Activated CD4-positive, alpha-beta memory T cell treated with anti-CD3 and anti-CD28 coated beads for 36 hours (primary cell): ENCODE measurements at regions of chr11 and their contacts with region 1.

Region 1: DNA sequence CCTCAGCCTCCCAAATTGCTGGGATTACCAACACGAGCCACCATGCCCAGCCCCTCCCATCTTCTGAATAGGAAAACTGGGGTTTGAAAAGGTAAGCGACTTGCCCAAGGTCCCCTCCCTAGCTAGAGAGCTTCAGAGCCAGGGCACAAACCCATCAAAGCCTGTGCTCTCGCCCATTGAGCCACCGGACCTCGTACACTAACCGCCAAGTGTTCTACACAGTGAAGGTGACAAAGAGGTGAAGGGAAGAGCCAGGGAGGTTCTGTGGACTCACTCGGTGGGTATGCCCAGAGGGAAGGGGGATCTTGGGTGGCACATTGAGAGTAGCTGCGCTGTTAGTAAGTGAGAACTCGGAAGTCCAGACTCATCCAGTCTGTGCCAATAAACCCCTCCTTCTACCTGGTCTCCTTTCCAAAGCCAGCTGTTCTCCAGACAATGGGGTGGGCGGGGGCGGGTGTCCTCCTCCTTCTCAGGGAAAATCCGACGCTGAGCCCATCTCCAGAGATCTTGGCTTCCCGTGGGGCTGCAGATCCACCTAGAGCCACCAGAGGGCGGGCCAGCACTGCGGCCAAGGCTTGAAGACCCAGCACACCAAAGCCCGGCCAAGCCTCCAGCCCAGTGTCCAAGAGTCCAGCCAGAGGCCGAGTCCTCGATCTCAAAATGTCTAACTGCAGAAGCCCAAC is 3.2 kb upstream of the RTN4RL2 start:
- DNase-seq: peak; percentile 84
- H3K4me3 Mint-ChIP-seq: peak overlapping the region; percentile 51
- H3K27ac Mint-ChIP-seq: no peak overlapping the region
- H3K4me1 Mint-ChIP-seq: peaks cover 25% of the 10 kb centered on the region
- H3K27me3 Mint-ChIP-seq: peaks cover 36% of the 10 kb centered on the region

Region 2: GRCh38 chr11:57345555-57346211 is 111.4 kb before region 1 on chr11:
- CTCF ChIA-PET with region 1: interaction called, 21 read pairs
- POLR2A ChIA-PET with region 1: no interaction called
- intact Hi-C with region 1: loop called (anchors 2 kb)
- DNase-seq: peak; percentile 76
- H3K4me3 Mint-ChIP-seq: no peak overlapping the region
- H3K27ac Mint-ChIP-seq: no peak overlapping the region
- H3K4me1 Mint-ChIP-seq: peaks cover 2% of the 10 kb centered on the region
- H3K27me3 Mint-ChIP-seq: peaks cover 2% of the 10 kb centered on the region

Region 3: DNA sequence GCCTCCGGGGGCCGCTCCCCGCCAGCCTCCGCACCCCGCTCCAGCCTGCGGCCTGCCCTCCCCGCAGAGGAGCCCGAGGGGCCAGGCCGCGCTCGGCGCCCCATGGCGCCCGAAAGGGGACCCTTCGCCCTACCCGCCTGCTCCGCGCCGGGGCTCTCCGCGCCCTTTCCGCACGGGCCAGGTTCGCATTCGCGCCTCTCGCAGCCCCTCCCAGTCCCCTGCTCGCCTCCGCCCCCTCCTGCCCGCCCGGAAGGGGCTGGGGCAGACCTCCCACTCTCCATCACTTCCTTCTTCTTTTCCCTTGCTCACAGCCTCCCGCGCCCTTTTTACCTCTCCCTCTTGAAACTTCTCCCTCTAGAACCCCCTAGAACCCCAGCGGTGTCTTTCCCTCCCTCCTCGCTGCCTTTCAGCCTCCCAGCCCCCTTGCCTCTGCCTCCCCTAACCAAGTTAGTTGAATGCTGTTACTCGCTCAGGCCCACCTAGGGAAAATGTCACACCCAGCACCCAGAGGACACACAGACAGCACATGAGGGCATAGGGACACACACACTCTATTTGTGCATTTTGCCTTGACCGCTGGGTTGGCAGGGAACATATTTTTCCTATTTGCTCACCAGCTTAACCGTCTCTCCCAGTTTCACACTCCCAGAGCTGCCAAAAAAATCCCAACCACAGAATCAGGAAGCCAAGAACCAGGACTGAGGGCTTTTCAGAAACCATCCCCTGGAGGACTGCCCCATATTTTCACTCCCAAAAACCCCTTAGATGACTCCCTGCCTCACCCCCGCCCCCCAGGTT is 30.0 kb before region 1 on chr11 and contains the start of gene SLC43A3:
- CTCF ChIA-PET with region 1: interaction called, 57 read pairs
- POLR2A ChIA-PET with region 1: no interaction called
- intact Hi-C with region 1: loop called (anchors 1 kb)
- DNase-seq: peak; percentile 87
- H3K4me3 Mint-ChIP-seq: peak within 1 kb of the TSS; percentile 96
- H3K27ac Mint-ChIP-seq: peak within 1 kb of the TSS; percentile 92
- H3K4me1 Mint-ChIP-seq: peaks cover 41% of the 10 kb centered on the region
- H3K27me3 Mint-ChIP-seq: no peaks in the 10 kb centered on the region
- total RNA-seq, gene SLC43A3: 170 to 186 TPM

Region 4: DNA sequence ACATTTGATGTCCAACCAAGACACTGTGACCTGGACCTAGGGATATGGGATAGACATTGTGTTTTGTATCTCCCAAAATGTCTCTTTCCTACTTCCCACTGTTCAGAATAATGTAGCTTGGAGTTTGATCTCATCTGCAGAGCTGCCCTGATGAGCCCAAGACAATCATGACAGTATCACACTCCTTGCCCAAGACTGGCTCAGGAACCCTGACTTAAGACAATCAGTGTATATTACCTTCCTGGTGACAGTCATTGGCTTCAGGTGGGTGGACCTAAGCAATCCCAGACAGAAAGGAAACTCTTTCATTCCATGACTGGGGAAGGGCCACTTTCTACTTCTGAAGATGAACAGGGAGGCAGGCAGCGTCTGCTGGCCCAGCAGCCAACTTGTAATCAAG is 11.0 kb before region 1 on chr11:
- CTCF ChIA-PET with region 1: interaction called, 19 read pairs
- POLR2A ChIA-PET with region 1: no interaction called
- intact Hi-C with region 1: no loop called
- DNase-seq: no peak
- H3K4me3 Mint-ChIP-seq: no peak overlapping the region
- H3K27ac Mint-ChIP-seq: no peak overlapping the region
- H3K4me1 Mint-ChIP-seq: no peaks in the 10 kb centered on the region
- H3K27me3 Mint-ChIP-seq: peaks cover 5% of the 10 kb centered on the region

Region 5: DNA sequence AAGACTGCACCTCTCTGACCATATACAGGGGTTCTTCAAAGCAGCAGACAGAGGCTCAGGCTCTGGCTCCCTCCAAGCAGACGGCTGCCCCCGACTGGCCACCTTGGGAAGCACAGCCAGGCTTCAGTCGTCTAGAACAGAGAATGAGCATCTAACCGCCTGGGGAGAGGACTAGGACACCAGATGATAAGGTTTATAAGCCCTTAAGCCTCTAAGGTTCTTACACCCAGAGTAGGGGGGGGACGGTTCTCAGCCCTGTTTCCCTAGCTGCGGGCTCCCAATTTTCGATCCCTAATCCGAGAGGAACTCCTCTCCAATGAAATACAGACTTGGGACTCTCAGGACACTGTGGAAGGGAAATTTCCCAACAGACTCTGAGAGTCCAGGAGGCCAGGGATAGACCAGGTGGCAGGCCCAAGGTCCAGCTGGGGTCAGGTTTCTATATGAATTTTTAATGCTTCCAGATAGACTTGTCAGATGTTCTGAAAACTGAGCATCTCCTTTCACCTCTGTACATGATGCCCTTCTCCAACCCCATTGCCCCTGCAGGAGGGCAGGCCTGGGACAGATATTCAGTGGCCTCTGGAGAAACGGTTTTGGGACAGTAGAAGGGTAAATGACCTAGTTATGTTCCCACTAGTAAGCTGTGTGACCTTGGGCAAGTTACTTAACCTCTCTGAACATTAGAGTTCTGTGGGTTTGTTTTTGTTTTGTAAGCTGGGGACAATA is 23.5 kb after region 1 on chr11:
- CTCF ChIA-PET with region 1: interaction called, 185 read pairs
- POLR2A ChIA-PET with region 1: interaction called, 3 read pairs
- intact Hi-C with region 1: loop called (anchors 1 kb)
- DNase-seq: peak; percentile 87
- H3K4me3 Mint-ChIP-seq: no peak overlapping the region
- H3K27ac Mint-ChIP-seq: no peak overlapping the region
- H3K4me1 Mint-ChIP-seq: peaks cover 13% of the 10 kb centered on the region
- H3K27me3 Mint-ChIP-seq: peaks cover 17% of the 10 kb centered on the region

Region 6: DNA sequence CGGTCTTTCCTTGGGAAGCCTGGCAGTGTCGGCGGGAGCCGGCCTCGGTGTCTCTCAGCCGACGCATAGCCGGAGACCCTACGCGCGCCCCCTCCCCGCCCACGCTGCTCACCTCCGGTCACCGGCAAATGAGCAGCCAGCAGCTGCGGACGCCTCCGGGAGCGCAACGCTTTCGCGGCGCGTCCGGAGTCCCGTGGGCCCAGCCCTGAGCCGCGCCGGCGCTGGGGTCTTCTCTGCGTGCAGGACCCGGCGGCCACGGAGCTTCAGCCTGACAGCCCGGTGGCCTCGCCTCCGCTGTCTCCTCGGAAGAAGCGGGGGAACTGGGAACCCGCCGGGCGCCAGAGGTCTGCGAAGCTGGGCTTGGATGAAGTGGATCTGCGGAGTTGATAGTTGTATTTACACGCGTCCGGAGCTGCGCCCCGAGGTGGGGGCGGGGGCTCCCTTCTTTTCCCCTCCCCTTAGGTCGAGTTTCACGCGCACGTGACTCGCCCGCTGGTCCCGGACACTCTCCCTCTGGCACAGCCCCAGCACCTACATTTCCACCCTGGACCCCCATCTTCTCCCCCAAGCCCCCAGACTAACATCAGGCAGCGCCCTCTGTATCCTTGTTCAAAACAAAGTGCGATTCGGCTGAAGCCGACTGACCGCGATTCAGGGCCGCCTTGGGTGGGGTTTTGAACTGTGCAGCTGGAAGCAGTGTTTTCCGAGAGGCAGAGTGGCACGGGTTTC is 58.4 kb after region 1 on chr11 and contains the start of gene SLC43A1:
- CTCF ChIA-PET with region 1: interaction called, 54 read pairs
- POLR2A ChIA-PET with region 1: no interaction called
- intact Hi-C with region 1: loop called (anchors 2 kb)
- DNase-seq: peak; percentile 60
- H3K4me3 Mint-ChIP-seq: peak within 1 kb of the TSS; percentile 96
- H3K27ac Mint-ChIP-seq: peak within 1 kb of the TSS; percentile 79
- H3K4me1 Mint-ChIP-seq: peaks cover 29% of the 10 kb centered on the region
- H3K27me3 Mint-ChIP-seq: no peaks in the 10 kb centered on the region
- total RNA-seq, gene SLC43A1: 23.1 to 23.3 TPM

Region 7: GRCh38 chr11:57567515-57568329 is 110.6 kb after region 1 on chr11 and contains the start of gene UBE2L6:
- CTCF ChIA-PET with region 1: interaction called, 13 read pairs
- POLR2A ChIA-PET with region 1: no interaction called
- intact Hi-C with region 1: loop called (anchors 1 kb)
- DNase-seq: peak; percentile 70
- H3K4me3 Mint-ChIP-seq: peak within 1 kb of the TSS; percentile 92
- H3K27ac Mint-ChIP-seq: peak within 1 kb of the TSS; percentile 98
- H3K4me1 Mint-ChIP-seq: peaks cover 31% of the 10 kb centered on the region
- H3K27me3 Mint-ChIP-seq: no peaks in the 10 kb centered on the region
- total RNA-seq, gene UBE2L6: 152 to 162 TPM

Region 8: DNA sequence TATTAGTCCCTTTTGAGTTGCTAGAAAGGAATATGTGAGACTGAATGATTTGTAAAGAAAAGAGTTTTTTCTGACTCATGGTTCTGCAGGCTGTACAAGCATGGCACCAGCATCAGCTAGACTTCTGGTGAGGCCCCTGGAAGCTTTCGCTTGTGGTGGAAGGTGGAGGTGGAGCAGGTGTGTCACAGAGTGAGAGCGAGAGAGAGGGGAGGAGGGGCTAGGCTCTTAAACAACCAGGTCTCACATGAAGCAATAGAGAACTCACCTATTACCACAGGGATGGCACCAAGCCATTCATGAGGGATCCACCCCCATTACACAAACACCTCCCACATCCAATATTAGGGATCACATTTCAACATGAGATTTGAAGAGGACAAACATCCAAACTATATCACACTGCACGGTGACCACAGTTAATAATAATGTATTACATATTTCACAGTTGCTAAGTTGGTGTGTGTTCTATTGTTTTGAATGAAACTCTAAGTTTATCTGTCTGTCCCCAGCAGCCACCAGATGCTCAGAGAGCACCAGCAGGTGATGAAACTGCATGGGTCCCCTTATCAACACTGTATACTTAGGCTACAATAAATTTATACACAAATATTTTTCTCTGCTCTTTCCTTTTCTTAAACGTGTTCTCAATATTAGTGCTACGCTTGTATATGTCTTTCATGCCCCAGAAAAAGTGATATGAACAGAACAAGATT is 1135.8 kb after region 1 on chr11:
- CTCF ChIA-PET with region 1: no interaction called
- POLR2A ChIA-PET with region 1: no interaction called
- intact Hi-C with region 1: no loop called
- DNase-seq: peak; percentile 76
- H3K4me3 Mint-ChIP-seq: no peak overlapping the region
- H3K27ac Mint-ChIP-seq: peak overlapping the region; percentile 45
- H3K4me1 Mint-ChIP-seq: peaks cover 73% of the 10 kb centered on the region
- H3K27me3 Mint-ChIP-seq: no peaks in the 10 kb centered on the region